WTC11 (cell line): ENCODE measurements at regions of chr1 and their contacts with region 1.

Region 1: DNA sequence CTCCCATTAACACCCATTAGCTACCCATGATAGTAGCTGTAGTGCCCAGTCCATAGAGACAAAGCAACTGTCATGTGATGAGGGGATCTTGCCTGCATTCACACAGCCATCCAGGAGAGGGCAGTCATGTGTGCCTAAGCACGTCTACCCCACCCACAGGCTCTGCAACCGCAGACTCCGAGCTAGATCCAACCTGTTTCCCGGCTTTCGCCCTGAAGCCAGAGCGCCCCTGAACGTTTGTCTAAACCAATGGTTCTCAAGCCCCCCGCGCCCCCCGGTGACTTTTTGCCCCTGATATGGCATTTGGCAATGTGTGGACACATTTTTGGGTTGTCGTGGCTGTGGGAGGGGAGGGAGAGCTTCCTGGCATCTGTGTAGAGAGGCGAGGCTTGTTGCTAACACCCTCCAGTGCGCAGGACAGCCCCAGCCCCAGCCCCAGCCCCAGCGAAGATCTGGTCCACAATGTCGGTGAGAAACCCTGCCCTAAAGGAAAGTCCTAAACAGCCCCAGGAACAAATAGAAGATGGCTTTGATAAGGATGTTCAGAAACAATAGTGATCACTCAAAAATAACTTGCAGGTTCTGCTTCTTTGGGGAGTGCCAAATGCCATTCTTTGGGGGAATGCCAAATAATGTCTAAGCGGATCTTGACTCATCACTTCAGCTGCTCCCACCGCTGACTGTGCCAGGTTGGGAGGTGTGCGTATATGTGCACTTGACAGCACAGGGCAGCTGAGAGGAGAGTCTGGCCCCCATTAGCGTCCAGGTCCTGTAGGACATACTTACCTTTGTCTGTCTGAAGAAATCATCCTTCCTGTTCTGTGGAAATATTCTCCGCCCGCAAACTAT is 34.5 kb downstream of the SLC44A3 start:
- DNase-seq: peak; percentile 87
- ATAC-seq: peak; percentile 97
- H3K4me3 Mint-ChIP-seq: no peak overlapping the region
- H3K27ac Mint-ChIP-seq: no peak overlapping the region
- H3K4me1 Mint-ChIP-seq: no peaks in the 10 kb centered on the region
- H3K27me3 Mint-ChIP-seq: no peaks in the 10 kb centered on the region
- CTCF ChIP-seq: peak; percentile 72

Region 2: GRCh38 chr1:94832446-94832845 is 22.2 kb before region 1 on chr1:
- CTCF ChIA-PET with region 1: interaction called, 13 read pairs
- POLR2A ChIA-PET with region 1: no interaction called
- DNase-seq: no peak
- ATAC-seq: no peak
- H3K4me3 Mint-ChIP-seq: no peak overlapping the region
- H3K27ac Mint-ChIP-seq: no peak overlapping the region
- H3K4me1 Mint-ChIP-seq: peaks cover 4% of the 10 kb centered on the region; the same call in 1 of the 2 replicates
- H3K27me3 Mint-ChIP-seq: no peaks in the 10 kb centered on the region
- CTCF ChIP-seq: no peak

Region 3: GRCh38 chr1:94887603-94888171 is 33.0 kb after region 1 on chr1:
- CTCF ChIA-PET with region 1: interaction called, 20 read pairs
- POLR2A ChIA-PET with region 1: interaction called, 3 read pairs
- DNase-seq: peak; percentile 58
- ATAC-seq: peak; percentile 77
- H3K4me3 Mint-ChIP-seq: peak overlapping the region; percentile 46
- H3K27ac Mint-ChIP-seq: peak overlapping the region; percentile 78
- H3K4me1 Mint-ChIP-seq: peaks cover 66% of the 10 kb centered on the region
- H3K27me3 Mint-ChIP-seq: peaks cover 3% of the 10 kb centered on the region
- CTCF ChIP-seq: no peak

Region 4: GRCh38 chr1:94920051-94920450 is 65.4 kb after region 1 on chr1:
- CTCF ChIA-PET with region 1: interaction called, 20 read pairs
- POLR2A ChIA-PET with region 1: interaction called, 3 read pairs
- DNase-seq: no peak
- ATAC-seq: peak; percentile 33
- H3K4me3 Mint-ChIP-seq: no peak overlapping the region
- H3K27ac Mint-ChIP-seq: peak overlapping the region; percentile 16
- H3K4me1 Mint-ChIP-seq: peaks cover 76% of the 10 kb centered on the region
- H3K27me3 Mint-ChIP-seq: no peaks in the 10 kb centered on the region
- CTCF ChIP-seq: no peak

Region 5: DNA sequence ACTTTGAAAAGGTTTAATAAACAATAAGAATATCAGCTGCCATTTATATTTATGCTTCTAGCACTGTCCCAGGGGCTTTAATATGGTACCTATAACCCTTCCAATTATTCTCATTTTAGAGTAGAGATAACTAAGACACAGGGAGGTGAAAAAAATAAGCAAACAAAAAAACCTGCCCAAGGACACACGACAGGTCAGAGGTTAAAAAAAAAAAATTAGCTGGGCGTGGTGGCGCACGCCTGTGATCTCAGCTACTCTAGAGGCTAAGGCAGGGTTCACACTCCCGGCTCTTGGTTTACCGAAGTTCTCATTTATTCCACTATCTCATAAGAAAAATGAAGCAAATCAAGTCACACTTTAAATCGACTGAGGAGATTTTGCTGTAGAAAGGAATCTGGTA is 106.9 kb after region 1 on chr1:
- CTCF ChIA-PET with region 1: no interaction called
- POLR2A ChIA-PET with region 1: no interaction called
- DNase-seq: no peak
- ATAC-seq: no peak
- H3K4me3 Mint-ChIP-seq: no peak overlapping the region
- H3K27ac Mint-ChIP-seq: no peak overlapping the region
- H3K4me1 Mint-ChIP-seq: no peaks in the 10 kb centered on the region
- H3K27me3 Mint-ChIP-seq: no peaks in the 10 kb centered on the region
- CTCF ChIP-seq: no peak

Region 6: GRCh38 chr1:95043141-95043980 is 188.7 kb after region 1 on chr1:
- CTCF ChIA-PET with region 1: interaction called, 140 read pairs
- POLR2A ChIA-PET with region 1: no interaction called
- DNase-seq: peak; percentile 87
- ATAC-seq: peak; percentile 95
- H3K4me3 Mint-ChIP-seq: no peak overlapping the region
- H3K27ac Mint-ChIP-seq: no peak overlapping the region
- H3K4me1 Mint-ChIP-seq: no peaks in the 10 kb centered on the region
- H3K27me3 Mint-ChIP-seq: no peaks in the 10 kb centered on the region
- CTCF ChIP-seq: peak; percentile 97

Region 7: GRCh38 chr1:95116580-95117206 is 262.0 kb after region 1 on chr1:
- CTCF ChIA-PET with region 1: interaction called, 12 read pairs
- POLR2A ChIA-PET with region 1: no interaction called
- DNase-seq: peak; percentile 73
- ATAC-seq: peak; percentile 74
- H3K4me3 Mint-ChIP-seq: peak overlapping the region; percentile 92
- H3K27ac Mint-ChIP-seq: peak overlapping the region; percentile 83
- H3K4me1 Mint-ChIP-seq: peaks cover 20% of the 10 kb centered on the region
- H3K27me3 Mint-ChIP-seq: peaks cover 19% of the 10 kb centered on the region
- CTCF ChIP-seq: peak; percentile 58